Activated naive CD4-positive, alpha-beta T cell treated with anti-CD3 and anti-CD28 coated beads, Interleukin-2, amount 10 ng/mL, durations not matched to agents 7 days and 5 days (primary cell): ENCODE measurements at regions of chr3 and their contacts with region 1.

Region 1: DNA sequence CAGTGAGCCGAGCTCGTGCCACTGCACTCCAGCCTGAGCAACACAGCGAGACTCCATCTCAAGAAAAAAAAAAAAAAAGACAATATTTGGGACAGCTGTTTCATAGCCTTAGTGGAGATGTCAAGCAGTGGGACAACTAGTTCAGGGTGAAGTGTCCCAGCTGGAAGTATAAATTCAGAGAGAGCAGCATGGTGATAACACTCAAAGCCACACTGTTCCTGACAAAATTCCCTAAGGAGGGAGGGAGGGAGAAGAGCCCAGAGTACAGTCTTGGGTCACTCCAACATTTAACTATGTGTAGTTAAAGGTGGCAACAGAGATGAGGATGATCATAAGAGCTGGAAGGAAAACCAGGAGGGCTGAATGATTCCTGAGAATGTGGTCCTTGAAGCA is 21.1 kb upstream of the IP6K2 start:
- DNase-seq: no peak
- H3K4me3 Mint-ChIP-seq: no peak overlapping the region
- H3K27ac Mint-ChIP-seq: no peak overlapping the region
- H3K4me1 Mint-ChIP-seq: peaks cover 6% of the 10 kb centered on the region
- H3K27me3 Mint-ChIP-seq: no peaks in the 10 kb centered on the region

Region 2: DNA sequence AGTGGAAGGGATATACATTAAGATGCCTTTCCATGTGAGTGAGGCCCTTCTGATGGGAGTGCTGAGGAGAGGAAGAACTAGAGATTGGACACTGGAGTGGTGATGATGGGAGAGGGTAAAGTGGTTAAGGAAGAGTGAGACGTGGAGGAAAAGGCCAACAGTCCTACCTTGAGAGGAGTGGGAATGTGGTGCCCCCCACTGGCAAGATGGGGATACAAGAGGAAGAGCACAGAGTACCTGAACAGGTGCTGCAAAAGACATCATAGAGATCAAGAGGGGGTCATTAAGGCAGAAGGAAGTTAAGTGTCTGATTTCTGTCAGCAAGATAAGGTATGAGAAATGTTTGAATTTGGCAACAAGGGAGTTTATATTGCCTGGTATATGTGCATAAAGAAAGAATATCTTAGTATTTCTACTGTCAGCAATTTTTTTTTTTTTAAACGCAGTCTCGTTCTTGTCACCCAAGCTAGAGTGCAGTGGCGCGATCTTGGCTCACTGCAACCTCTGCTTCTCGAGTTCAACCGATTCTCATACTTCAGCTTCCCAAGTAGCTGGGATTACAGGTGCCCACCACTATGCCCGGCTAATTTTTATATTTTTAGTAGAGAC is 214.5 kb after region 1 on chr3:
- CTCF ChIA-PET with region 1: interaction called, 15 read pairs
- DNase-seq: peak; percentile 69
- H3K4me3 Mint-ChIP-seq: no peak overlapping the region
- H3K27ac Mint-ChIP-seq: no peak overlapping the region
- H3K4me1 Mint-ChIP-seq: peaks cover 2% of the 10 kb centered on the region
- H3K27me3 Mint-ChIP-seq: no peaks in the 10 kb centered on the region